Heart left ventricle (tissue), 16 donors: ENCODE measurements at regions of chr5 and their contacts with region 1.

Region 1: GRCh38 chr5:178204182-178204894 is at the start of gene HNRNPAB:
- DNase-seq: peak; percentile 95 to 97 (median 96)
- ATAC-seq: peak; percentile 91 to 97 (median 95)
- H3K4me3 ChIP-seq: peak within 1 kb of the TSS; percentile 66 to 100 (median 92)
- H3K27ac ChIP-seq: peak within 1 kb of the TSS; percentile 71 to 97 (median 94)
- H3K4me1 ChIP-seq: peaks cover 11 to 42% (median 24%) of the 10 kb centered on the region in 12 donors
- H3K27me3 ChIP-seq: no peaks in the 10 kb centered on the region
- CTCF ChIP-seq: no peak
- POLR2A ChIP-seq: peak; percentile 88 to 99
- total RNA-seq, gene HNRNPAB: 64.2 to 139 (median 85.7) TPM

Region 2: GRCh38 chr5:178149199-178149906 is 55.0 kb before region 1 on chr5:
- intact Hi-C with region 1: no loop called
- DNase-seq: no peak
- ATAC-seq: no peak
- H3K4me3 ChIP-seq: no peak overlapping the region
- H3K27ac ChIP-seq: no peak overlapping the region
- H3K4me1 ChIP-seq: peaks cover 6 to 27% (median 16%) of the 10 kb centered on the region in 12 donors
- H3K27me3 ChIP-seq: no peaks in the 10 kb centered on the region
- CTCF ChIP-seq: no peak
- POLR2A ChIP-seq: no peak

Region 3: DNA sequence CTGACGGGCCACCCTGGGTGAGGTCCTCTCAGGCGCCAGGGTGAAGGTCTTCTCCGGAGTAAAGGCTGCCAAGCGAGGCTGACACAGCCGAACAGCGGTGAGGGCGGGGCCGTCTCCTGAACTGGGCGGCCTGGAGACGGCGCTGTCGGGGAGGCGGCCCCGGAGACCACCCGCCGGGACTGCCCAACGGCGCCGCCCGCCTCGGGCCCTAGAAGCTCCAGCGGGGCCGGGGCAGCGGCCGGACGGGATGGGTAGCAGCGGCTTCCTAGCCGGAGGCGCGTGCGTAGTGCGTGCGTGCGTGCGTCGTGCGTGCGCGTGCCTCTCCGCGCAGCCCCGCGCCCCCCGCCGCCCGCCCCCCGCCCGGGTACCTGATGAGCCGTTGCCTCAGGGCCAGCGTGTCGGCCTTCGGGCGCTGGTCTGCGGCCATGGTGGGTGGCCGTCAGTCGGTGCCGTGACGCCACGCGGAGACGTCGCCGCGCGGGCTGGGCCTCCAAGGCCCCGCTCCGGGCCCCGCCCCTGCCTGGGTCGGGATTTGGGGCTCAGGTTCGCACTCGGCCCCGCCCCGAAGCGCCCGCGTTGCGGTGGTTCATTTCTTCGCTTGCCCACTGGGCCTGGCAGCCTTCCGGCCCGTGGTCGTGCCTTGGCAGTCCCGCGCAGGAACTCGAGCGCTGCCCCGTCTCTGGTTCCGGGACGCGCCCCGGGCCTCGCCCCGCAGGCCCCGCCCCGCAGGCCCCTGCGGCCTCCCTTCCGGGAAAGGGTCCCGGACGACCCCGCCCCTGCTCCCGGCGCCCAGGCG is 28.0 kb after region 1 on chr5 and contains the start of gene PHYKPL:
- intact Hi-C with region 1: loop called in 1 of 10 experiments (anchors 2 kb)
- DNase-seq: peak; percentile 69 to 89 (median 81)
- ATAC-seq: peak; percentile 29 to 81 (median 70)
- H3K4me3 ChIP-seq: peak within 1 kb of the TSS; percentile 59 to 97 (median 73)
- H3K27ac ChIP-seq: peak within 1 kb of the TSS; percentile 82 to 99 (median 98)
- H3K4me1 ChIP-seq: peaks cover 5 to 67% (median 39%) of the 10 kb centered on the region in 12 donors
- H3K27me3 ChIP-seq: no peaks in the 10 kb centered on the region
- CTCF ChIP-seq: peak in 2 of 12 donors; percentile 15 to 17
- POLR2A ChIP-seq: peak in 1 of 2 donors; percentile 54
- total RNA-seq, gene PHYKPL: 33.3 to 56.2 (median 38.6) TPM

Region 4: GRCh38 chr5:178249191-178249989 is 45.1 kb after region 1 on chr5:
- intact Hi-C with region 1: no loop called
- DNase-seq: peak in 1 of 5 donors; percentile 72
- ATAC-seq: peak; percentile 55 to 85 (median 80)
- H3K4me3 ChIP-seq: no peak overlapping the region
- H3K27ac ChIP-seq: no peak overlapping the region
- H3K4me1 ChIP-seq: peaks cover 0 to 12% (median 0%) of the 10 kb centered on the region in 12 donors
- H3K27me3 ChIP-seq: no peaks in the 10 kb centered on the region
- CTCF ChIP-seq: no peak
- POLR2A ChIP-seq: no peak